Adrenal gland (tissue), 19 donors: ENCODE measurements at regions of chr16 and their contacts with region 1.

Region 1: DNA sequence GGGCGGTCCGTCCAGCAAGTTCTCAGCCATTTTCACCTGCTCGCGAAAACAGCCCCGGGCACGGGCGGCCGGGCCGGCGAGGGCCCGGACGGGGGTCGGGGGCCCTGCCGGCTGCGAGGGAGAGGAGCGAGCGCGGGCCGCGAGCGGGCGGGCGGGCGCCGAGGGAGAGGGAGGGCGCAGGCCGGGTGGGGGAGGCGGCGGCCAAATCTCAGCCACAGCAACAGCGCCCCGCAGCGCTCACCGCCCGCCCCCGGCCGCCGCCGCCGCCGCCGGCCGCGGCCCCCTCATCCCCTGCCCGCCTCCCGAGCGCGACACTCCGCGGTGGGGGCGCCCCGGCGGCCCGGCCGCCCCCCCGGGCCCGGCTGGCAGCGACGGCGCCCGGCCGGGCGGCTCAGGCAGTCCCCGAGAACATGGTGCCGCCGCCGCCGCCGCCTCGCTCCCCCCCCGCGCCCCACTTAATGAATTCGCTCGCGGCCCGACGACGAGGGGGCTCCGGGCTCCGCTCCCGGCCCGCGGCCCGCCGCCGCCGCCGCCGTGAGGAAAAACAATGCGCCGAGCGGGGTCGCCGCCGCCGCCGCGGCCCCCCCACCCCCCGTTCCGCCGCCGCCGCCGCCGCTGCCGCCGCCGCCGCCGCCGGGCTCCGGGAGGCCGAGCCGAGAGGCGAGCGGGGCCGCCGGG is 487 bp downstream of the CREBBP start:
- DNase-seq: peak; percentile 62 to 82 (median 79)
- H3K4me3 ChIP-seq: peak overlapping the region; percentile 13 to 99 (median 76)
- H3K27ac ChIP-seq: peak overlapping the region in 3 of 5 donors; percentile 51 to 99 (median 80)
- H3K4me1 ChIP-seq: peaks cover 21 to 40% of the 10 kb centered on the region in 2 donors
- H3K27me3 ChIP-seq: no peaks in the 10 kb centered on the region
- CTCF ChIP-seq: peak in 1 of 6 experiments; percentile 33
- POLR2A ChIP-seq: no peak

Region 2: GRCh38 chr16:3690470-3690928 is 189.5 kb before region 1 on chr16:
- intact Hi-C with region 1: loop called in 1 of 2 experiments (anchors 5 kb)
- DNase-seq: peak; percentile 92 to 98 (median 94)
- H3K4me3 ChIP-seq: peak overlapping the region in 2 of 4 donors; percentile 23 to 45
- H3K27ac ChIP-seq: peak overlapping the region in 3 of 5 donors; percentile 15 to 60 (median 24)
- H3K4me1 ChIP-seq: peaks cover 4 to 8% of the 10 kb centered on the region in 2 donors
- H3K27me3 ChIP-seq: no peaks in the 10 kb centered on the region
- CTCF ChIP-seq: peak; percentile 92 to 95 (median 94)
- POLR2A ChIP-seq: peak in 1 of 2 donors; percentile 23

Region 3: GRCh38 chr16:3761375-3762106 is 118.5 kb before region 1 on chr16:
- intact Hi-C with region 1: loop called in 1 of 2 experiments (anchors 10 kb)
- DNase-seq: peak in 1 of 7 donors; percentile 82
- H3K4me3 ChIP-seq: no peak overlapping the region
- H3K27ac ChIP-seq: no peak overlapping the region
- H3K4me1 ChIP-seq: no peaks in the 10 kb centered on the region
- H3K27me3 ChIP-seq: no peaks in the 10 kb centered on the region
- CTCF ChIP-seq: no peak
- POLR2A ChIP-seq: no peak

Region 4: GRCh38 chr16:3924763-3925162 is 44.7 kb after region 1 on chr16:
- intact Hi-C with region 1: no loop called
- DNase-seq: no peak
- H3K4me3 ChIP-seq: no peak overlapping the region
- H3K27ac ChIP-seq: no peak overlapping the region
- H3K4me1 ChIP-seq: no peaks in the 10 kb centered on the region
- H3K27me3 ChIP-seq: no peaks in the 10 kb centered on the region
- CTCF ChIP-seq: no peak
- POLR2A ChIP-seq: no peak